ENCODE measurements at regions of chr3 and their contacts with region 1.

Region 1: GRCh38 chr3:127688416-127689265 is 15.9 kb downstream of the ABTB1 start:
- DNase-seq: peak in 3 of 4 donors; percentile 13 to 66 (median 37)
- ATAC-seq: no peak
- H3K4me3 ChIP-seq: no peak overlapping the region
- H3K27ac ChIP-seq: no peak overlapping the region
- H3K4me1 ChIP-seq: no peaks in the 10 kb centered on the region
- H3K27me3 ChIP-seq: no peaks in the 10 kb centered on the region
- CTCF ChIP-seq: no peak
- POLR2A ChIP-seq: no peak

Region 2: DNA sequence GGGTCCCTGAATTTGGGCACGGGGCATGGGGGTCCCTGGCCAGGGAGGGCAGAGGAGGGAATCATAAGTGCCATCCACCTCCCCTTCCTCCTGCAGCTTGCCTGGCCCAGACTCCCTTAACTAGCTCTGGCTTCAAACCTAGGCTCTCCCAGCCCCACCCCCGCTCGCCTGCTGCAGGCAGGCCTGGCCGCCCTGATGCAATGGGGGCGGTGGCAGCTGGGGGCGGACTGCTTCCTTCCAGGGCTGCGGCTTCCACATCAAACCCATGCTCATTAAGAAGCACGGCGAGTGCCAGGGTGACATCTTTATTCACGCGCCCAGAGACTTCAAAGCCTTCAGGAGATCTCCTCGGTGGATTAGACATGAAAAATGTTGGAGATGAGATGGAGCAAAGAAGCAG is 221.2 kb before region 1 on chr3:
- intact Hi-C with region 1: no loop called
- DNase-seq: no peak
- ATAC-seq: no peak
- H3K4me3 ChIP-seq: no peak overlapping the region
- H3K27ac ChIP-seq: no peak overlapping the region
- H3K4me1 ChIP-seq: no peaks in the 10 kb centered on the region
- H3K27me3 ChIP-seq: no peaks in the 10 kb centered on the region
- CTCF ChIP-seq: no peak
- POLR2A ChIP-seq: no peak

Region 3: GRCh38 chr3:127574880-127575878 is 113.5 kb before region 1 on chr3:
- intact Hi-C with region 1: loop called (anchors 10 kb)
- DNase-seq: peak; percentile 83 to 91 (median 88)
- ATAC-seq: peak; percentile 88
- H3K4me3 ChIP-seq: no peak overlapping the region
- H3K27ac ChIP-seq: no peak overlapping the region
- H3K4me1 ChIP-seq: peaks cover 5% of the 10 kb centered on the region
- H3K27me3 ChIP-seq: no peaks in the 10 kb centered on the region
- CTCF ChIP-seq: peak; percentile 94 to 99 (median 96)
- POLR2A ChIP-seq: no peak

Measured in body of pancreas (tissue), 4 donors.